Endothelial cell of umbilical vein (primary cell): ENCODE measurements at regions of chr10 and their contacts with region 1.

Region 1: DNA sequence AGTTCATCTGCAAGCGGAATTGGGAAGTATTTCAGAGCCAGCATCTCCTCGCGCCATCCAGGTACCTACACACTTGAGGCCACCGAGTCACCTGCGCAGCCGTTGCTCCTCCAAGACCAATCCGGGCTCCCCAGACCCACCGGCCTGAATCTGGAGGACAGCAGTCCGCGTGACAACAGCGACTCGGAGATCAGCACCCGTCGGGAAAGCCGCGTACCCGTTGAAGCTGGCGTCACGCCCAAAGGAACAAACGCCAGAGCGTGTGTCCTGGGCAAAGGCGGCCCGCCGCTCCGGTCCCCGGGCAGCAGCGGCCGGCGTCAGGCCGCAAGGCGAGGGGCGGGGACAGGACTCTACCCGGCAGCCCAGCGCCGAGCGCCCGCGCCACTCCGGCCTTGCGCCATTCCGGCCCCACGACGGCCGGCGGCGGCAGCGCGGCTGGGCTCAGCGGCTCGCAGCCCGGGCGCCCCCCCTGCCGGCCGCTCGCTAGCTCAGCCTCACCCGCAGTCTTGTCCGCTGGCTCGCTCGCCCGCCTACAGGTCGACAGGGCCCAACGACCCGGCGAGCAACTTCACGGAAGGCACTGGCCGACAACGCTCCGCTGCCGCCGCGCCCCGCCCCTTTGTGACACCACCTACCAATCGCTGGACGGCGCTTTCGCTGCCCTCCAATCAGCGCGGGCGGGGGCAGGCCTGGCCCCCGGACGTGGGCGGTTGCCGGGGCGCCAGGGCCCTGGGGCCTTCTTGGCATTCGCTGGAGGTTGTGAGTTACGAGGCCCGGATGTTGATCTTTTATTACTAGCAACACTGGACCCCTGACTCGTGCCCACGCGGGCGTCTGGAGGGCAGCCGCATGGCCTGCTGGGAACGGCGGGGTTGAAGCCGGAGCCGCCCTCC is at the start of gene ZFAND4:
- DNase-seq: peak; percentile 97
- H3K4me3 ChIP-seq: peak within 1 kb of the TSS; percentile 33 to 78 (median 59)
- H3K27ac ChIP-seq: peak within 1 kb of the TSS; percentile 52
- H3K4me1 ChIP-seq: peaks cover 6% of the 10 kb centered on the region
- H3K27me3 ChIP-seq: no peaks in the 10 kb centered on the region
- CTCF ChIP-seq: peak; percentile 68 to 82
- POLR2A ChIP-seq: peak; percentile 55
- total RNA-seq, gene ZFAND4: 7.2 and 7.8 TPM in 2 replicates

Region 2: DNA sequence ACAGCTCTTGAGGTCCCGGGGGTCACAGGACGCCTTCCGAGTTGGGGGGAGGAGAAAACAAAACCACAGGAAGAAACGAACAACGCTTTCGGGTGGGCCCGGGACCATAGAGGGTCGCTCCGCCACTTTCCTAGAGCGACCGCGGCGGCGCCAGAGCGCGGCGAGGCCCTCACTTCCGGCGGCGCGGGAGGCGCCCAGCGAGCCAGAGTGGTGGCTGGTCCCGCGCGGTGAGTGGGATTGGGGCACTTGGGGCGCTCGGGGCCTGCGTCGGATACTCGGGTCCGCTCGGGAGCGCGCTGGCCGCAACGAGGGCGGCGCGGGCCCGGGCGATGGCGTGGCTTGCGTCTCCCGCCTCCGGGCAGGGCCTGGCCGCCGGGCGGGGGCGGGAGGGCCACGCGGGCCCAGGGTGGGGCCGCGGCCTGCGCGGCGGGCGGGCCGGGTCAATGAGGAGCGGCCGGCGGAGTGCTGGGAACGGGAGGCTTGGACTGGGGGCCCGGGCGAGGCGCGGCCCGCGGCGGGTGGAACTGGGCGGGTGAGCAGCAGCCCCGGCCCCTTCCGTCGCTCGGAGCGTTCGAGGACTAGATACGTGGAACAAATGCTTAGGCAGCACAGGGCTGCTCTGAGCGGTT is 671.6 kb before region 1 on chr10 and contains the start of gene ZNF22:
- CTCF ChIA-PET with region 1: no interaction called
- POLR2A ChIA-PET with region 1: no interaction called
- dilution Hi-C with region 1: no loop called
- intact Hi-C with region 1: loop called (anchors 1 kb)
- DNase-seq: peak; percentile 75
- H3K4me3 ChIP-seq: peak within 1 kb of the TSS; percentile 34 to 86 (median 48)
- H3K27ac ChIP-seq: peak within 1 kb of the TSS; percentile 89
- H3K4me1 ChIP-seq: peaks cover 27% of the 10 kb centered on the region
- H3K27me3 ChIP-seq: no peaks in the 10 kb centered on the region
- CTCF ChIP-seq: peak in 1 of 2 donors; percentile 19
- POLR2A ChIP-seq: peak; percentile 80
- total RNA-seq, gene ZNF22: 45.0 and 48.7 TPM in 2 replicates

Region 3: DNA sequence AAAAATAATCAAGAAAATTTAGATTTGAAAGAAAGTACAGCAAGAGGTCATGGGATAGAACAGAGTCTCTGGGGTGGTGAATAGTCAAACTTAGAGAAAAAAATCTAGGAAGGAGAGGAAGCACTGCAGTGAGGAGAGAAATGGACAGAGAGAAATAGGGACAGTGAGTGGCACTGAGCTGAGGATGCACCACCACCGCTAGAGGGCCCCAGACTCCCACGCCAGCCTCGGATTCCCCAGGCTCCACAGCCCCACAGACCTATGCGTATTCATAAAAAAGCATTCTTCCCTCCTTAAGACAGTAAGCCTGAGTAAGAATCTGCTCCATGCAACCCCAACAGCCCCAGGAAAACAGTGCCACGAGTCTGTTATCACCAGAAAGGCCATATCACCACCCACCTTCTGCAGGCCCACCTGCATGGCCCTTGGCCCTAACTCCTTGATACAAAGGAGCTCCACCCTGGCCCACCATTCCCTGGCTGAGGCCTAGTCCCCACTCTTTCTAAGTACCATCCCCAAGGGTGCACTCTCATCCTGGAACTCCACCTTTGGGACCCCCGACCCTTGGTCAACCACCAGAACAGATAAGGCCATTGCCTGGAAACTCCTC is 207.4 kb before region 1 on chr10:
- CTCF ChIA-PET with region 1: interaction called, 84 read pairs
- POLR2A ChIA-PET with region 1: no interaction called
- dilution Hi-C with region 1: no loop called
- intact Hi-C with region 1: loop called (anchors 1 kb)
- DNase-seq: peak; percentile 67
- H3K4me3 ChIP-seq: no peak overlapping the region
- H3K27ac ChIP-seq: no peak overlapping the region
- H3K4me1 ChIP-seq: peaks cover 3% of the 10 kb centered on the region
- H3K27me3 ChIP-seq: no peaks in the 10 kb centered on the region
- CTCF ChIP-seq: peak; percentile 92 to 98
- POLR2A ChIP-seq: no peak

Region 4: DNA sequence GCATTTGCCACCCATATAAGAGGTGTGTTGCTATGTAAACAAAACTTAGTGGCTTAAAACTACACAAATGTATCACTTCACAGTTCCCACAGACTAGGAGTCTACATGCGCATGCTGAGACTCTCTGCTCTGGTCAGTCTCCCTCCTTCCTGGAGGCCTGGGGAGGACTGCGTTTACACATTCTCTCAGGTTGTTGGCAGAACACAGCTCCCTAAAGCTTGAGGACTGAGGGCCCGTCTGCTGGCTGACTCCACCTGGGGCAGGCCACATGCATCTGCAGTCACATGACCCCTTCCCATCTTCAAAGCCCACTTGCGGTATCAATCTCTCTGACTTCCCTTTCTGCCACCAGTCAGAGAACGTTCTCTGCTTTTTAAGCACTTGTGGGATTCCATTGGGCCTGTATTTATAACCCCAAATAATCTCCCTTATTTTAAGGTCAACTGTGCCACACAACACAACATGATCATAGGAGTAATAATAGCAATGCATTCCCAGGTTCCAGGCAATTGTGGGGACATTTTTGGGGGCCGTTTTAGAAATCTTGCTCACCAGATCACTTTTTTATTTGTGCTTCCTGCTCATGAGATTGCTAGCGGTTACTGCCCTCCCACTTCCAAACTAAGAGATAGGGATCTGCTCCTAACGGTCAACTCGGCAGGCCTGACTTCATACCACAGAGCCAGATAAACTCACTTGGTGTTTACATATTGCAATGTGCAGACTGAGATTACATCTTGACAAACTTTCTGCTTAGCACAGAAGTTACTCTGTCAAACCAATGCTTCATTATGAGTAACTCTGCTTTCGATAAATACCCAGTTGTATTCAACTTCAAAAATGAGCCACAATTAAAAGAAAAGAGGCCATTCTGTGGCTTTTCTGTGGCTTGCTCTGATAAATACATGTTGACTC is 202.1 kb before region 1 on chr10:
- CTCF ChIA-PET with region 1: interaction called, 84 read pairs
- POLR2A ChIA-PET with region 1: no interaction called
- dilution Hi-C with region 1: no loop called
- intact Hi-C with region 1: loop called (anchors 1 kb)
- DNase-seq: peak; percentile 95
- H3K4me3 ChIP-seq: no peak overlapping the region
- H3K27ac ChIP-seq: peak overlapping the region; percentile 42
- H3K4me1 ChIP-seq: peaks cover 23% of the 10 kb centered on the region
- H3K27me3 ChIP-seq: no peaks in the 10 kb centered on the region
- CTCF ChIP-seq: no peak
- POLR2A ChIP-seq: peak; percentile 55

Region 5: DNA sequence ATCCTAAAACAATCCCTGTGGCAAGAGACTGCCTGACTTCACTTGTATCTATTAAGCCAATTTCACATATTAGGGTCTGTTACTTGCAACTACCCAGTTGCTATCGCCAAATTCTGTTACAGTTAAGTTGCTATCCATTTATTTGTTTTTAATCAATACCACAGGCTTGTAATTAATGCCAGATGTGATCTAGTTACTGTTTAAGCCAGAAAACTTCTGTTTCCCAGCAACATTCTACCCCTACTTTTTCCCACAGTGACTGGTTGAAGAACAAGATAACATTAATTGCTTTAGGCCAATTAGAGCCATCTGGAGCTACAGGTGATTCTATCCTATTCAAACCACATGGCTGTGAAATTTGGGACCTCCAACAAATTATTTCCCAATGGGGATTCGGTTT is 167.1 kb before region 1 on chr10:
- CTCF ChIA-PET with region 1: no interaction called
- POLR2A ChIA-PET with region 1: no interaction called
- dilution Hi-C with region 1: no loop called
- intact Hi-C with region 1: no loop called
- DNase-seq: no peak
- H3K4me3 ChIP-seq: no peak overlapping the region
- H3K27ac ChIP-seq: no peak overlapping the region
- H3K4me1 ChIP-seq: no peaks in the 10 kb centered on the region
- H3K27me3 ChIP-seq: no peaks in the 10 kb centered on the region
- CTCF ChIP-seq: no peak
- POLR2A ChIP-seq: no peak

Region 6: GRCh38 chr10:45653454-45653853 is 19.0 kb before region 1 on chr10:
- CTCF ChIA-PET with region 1: no interaction called
- POLR2A ChIA-PET with region 1: no interaction called
- dilution Hi-C with region 1: no loop called
- intact Hi-C with region 1: no loop called
- DNase-seq: no peak
- H3K4me3 ChIP-seq: no peak overlapping the region
- H3K27ac ChIP-seq: no peak overlapping the region
- H3K4me1 ChIP-seq: no peaks in the 10 kb centered on the region
- H3K27me3 ChIP-seq: no peaks in the 10 kb centered on the region
- CTCF ChIP-seq: no peak
- POLR2A ChIP-seq: no peak